Mammary epithelial cell (primary cell): ENCODE measurements at regions of chr12 and their contacts with region 1.

Region 1: DNA sequence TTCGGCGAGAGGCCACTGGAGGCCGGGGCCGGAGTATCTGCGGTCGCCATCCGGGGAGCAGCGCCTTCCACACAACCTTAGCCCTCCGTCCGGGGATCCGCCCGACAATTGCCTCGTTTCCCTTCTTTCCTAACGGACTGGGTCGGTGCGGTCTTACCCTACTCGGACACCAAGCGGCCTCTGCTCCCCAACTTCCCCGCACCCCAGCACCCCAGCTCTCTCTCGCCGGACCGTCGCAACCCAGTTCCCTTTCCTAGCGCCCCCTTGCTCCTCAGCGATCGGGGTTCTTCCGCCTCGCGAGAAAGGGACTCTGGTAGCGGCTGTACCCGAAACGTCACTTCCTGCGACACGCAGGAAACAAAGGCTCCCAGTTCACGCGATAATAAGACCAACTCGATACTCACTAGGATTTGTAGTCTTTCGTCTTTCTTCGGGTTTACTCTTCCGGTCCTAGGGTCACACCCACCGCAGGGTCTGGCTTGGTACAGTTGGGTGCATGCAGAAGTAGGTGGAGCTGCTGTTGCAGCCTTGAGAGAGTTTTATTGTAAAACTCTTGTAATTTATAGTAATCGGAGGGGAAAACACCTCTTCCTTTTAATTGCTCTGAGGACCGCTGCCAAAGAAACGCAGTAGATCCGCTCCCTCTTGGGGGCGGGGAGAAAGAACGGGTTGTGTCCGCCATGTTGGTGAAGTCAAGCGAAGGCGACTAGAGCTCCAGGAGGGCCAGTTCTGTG is at the start of gene ZFC3H1:
- DNase-seq: peak; percentile 99
- H3K4me3 ChIP-seq: peak within 1 kb of the TSS; percentile 78 to 98 (median 92)
- H3K27ac ChIP-seq: peak within 1 kb of the TSS; percentile 96
- H3K4me1 ChIP-seq: peaks cover 13% of the 10 kb centered on the region
- H3K27me3 ChIP-seq: no peaks in the 10 kb centered on the region
- CTCF ChIP-seq: peak in 1 of 2 donors; percentile 45
- total RNA-seq, gene ZFC3H1: 31.2 to 50.2 TPM

Region 2: DNA sequence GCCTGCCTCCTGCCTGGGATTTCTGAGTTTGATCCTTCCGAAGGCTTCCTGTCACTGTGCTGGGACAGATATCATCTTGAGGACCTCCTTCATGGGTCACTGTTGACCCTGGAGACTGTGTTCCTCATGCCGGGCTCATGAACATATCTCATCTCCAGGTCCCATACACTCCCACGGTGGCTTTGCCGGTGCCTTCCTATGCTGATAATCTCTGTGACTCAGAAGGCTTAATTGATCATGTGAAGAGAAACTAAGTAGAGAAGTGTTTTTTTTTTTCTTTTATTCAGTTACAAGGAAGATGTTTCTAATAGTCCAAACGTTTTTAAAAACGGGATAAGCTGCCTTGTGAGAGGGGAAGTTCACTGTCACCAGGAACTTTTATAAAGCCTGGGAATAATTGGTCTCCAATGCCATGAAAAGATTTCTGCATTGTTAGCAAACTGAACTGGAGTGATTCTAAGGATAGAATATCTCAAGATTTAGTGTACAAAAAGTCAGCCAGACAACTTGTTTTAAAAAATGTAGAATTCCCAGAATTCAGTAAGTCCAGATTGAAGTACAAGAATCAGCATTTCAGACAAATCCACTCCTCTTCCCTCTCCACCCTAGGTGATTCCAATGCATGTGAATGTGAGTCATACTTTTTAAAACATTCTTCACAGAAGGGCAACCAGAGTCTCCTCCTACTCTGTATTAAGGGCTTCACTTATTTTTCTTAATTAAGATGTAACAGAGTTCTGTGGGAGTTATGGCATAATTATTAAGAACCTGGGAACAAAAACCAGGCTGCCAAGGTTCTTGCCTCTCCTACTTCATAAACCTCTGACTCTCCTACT is 364.0 kb before region 1 on chr12:
- CTCF ChIA-PET with region 1: no interaction called
- dilution Hi-C with region 1: no loop called
- in situ Hi-C with region 1: no loop called
- intact Hi-C with region 1: no loop called
- DNase-seq: peak; percentile 53
- H3K4me3 ChIP-seq: no peak overlapping the region
- H3K27ac ChIP-seq: no peak overlapping the region
- H3K4me1 ChIP-seq: no peaks in the 10 kb centered on the region
- H3K27me3 ChIP-seq: no peaks in the 10 kb centered on the region
- CTCF ChIP-seq: no peak

Region 3: GRCh38 chr12:71438670-71439361 is 224.9 kb before region 1 on chr12:
- CTCF ChIA-PET with region 1: no interaction called
- dilution Hi-C with region 1: no loop called
- in situ Hi-C with region 1: no loop called
- intact Hi-C with region 1: no loop called
- DNase-seq: no peak
- H3K4me3 ChIP-seq: no peak overlapping the region
- H3K27ac ChIP-seq: no peak overlapping the region
- H3K4me1 ChIP-seq: peaks cover 11% of the 10 kb centered on the region
- H3K27me3 ChIP-seq: peaks cover 42% of the 10 kb centered on the region
- CTCF ChIP-seq: no peak

Region 4: GRCh38 chr12:71503579-71504391 is 159.9 kb before region 1 on chr12:
- CTCF ChIA-PET with region 1: no interaction called
- dilution Hi-C with region 1: no loop called
- in situ Hi-C with region 1: no loop called
- intact Hi-C with region 1: no loop called
- DNase-seq: no peak
- H3K4me3 ChIP-seq: no peak overlapping the region
- H3K27ac ChIP-seq: no peak overlapping the region
- H3K4me1 ChIP-seq: no peaks in the 10 kb centered on the region
- H3K27me3 ChIP-seq: no peaks in the 10 kb centered on the region
- CTCF ChIP-seq: no peak

Region 5: GRCh38 chr12:71685914-71686665 is 22.4 kb after region 1 on chr12 and contains the start of gene TMEM19:
- CTCF ChIA-PET with region 1: interaction called, 6 read pairs
- dilution Hi-C with region 1: no loop called
- in situ Hi-C with region 1: no loop called
- intact Hi-C with region 1: loop called (anchors 1 kb)
- DNase-seq: peak; percentile 91
- H3K4me3 ChIP-seq: peak within 1 kb of the TSS; percentile 86 to 97 (median 89)
- H3K27ac ChIP-seq: peak within 1 kb of the TSS; percentile 81
- H3K4me1 ChIP-seq: peaks cover 11% of the 10 kb centered on the region
- H3K27me3 ChIP-seq: no peaks in the 10 kb centered on the region
- CTCF ChIP-seq: peak in 1 of 2 donors; percentile 65
- total RNA-seq, gene TMEM19: 22.1 to 41.7 TPM

Region 6: DNA sequence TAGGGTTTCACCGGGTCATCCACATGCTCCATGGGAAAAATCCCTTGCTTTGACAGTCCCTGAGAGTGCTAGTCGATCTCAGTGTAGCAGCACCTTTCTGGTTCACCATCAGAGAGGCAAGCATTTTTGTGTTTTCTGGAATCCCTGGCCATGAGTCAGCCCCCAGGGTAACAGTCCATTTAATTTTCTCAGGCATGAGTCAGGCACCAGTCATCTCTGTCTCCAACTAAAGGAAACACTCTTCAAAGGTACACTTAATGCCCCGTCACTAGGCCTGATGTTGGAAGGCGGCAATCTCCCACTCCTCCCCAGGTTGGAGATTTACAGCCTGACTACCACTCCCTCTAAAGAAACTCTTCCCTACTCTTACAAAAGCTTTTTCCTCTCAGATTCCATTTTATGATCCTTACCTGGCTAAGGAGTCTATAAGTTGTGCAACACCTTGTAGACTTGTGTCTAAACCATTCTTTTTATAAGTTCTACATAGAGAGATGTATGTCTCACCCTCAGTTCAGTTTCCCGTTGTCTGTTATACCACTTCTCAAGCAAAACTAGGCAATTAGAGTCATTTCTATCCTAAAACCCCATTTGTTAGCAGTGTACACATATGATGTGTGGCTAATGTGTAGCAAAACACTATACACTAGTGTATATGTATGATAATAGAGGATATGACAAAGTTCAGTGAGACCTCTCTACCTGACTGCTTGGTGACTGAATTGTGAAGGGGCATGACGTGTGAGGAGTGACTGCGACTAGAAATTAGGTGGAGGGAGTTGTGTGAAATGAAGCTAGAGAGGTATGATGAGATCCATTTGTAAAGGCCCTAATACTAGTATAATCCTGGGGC is 46.8 kb after region 1 on chr12:
- CTCF ChIA-PET with region 1: no interaction called
- dilution Hi-C with region 1: loop called (anchors 5 kb)
- in situ Hi-C with region 1: no loop called
- intact Hi-C with region 1: loop called (anchors 2 kb)
- DNase-seq: peak; percentile 97
- H3K4me3 ChIP-seq: no peak overlapping the region
- H3K27ac ChIP-seq: peak overlapping the region; percentile 78
- H3K4me1 ChIP-seq: peaks cover 33% of the 10 kb centered on the region
- H3K27me3 ChIP-seq: no peaks in the 10 kb centered on the region
- CTCF ChIP-seq: no peak

Region 7: GRCh38 chr12:71719615-71720370 is 56.1 kb after region 1 on chr12:
- CTCF ChIA-PET with region 1: interaction called, 37 read pairs
- dilution Hi-C with region 1: loop called (anchors 5 kb)
- in situ Hi-C with region 1: no loop called
- intact Hi-C with region 1: no loop called
- DNase-seq: peak; percentile 95
- H3K4me3 ChIP-seq: peak overlapping the region in 1 of 3 experiments; percentile 16
- H3K27ac ChIP-seq: peak overlapping the region; percentile 22
- H3K4me1 ChIP-seq: peaks cover 16% of the 10 kb centered on the region
- H3K27me3 ChIP-seq: no peaks in the 10 kb centered on the region
- CTCF ChIP-seq: no peak

Region 8: GRCh38 chr12:71746983-71747611 is 83.4 kb after region 1 on chr12:
- CTCF ChIA-PET with region 1: interaction called, 4 read pairs
- dilution Hi-C with region 1: loop called (anchors 5 kb)
- in situ Hi-C with region 1: loop called in 1 of 2 experiments (anchors 5 kb)
- intact Hi-C with region 1: loop called (anchors 1 kb)
- DNase-seq: peak; percentile 50
- H3K4me3 ChIP-seq: no peak overlapping the region
- H3K27ac ChIP-seq: no peak overlapping the region
- H3K4me1 ChIP-seq: no peaks in the 10 kb centered on the region
- H3K27me3 ChIP-seq: no peaks in the 10 kb centered on the region
- CTCF ChIP-seq: peak; percentile 72 to 81

Region 9: GRCh38 chr12:71754461-71755145 is 90.9 kb after region 1 on chr12 and contains the start of gene RAB21:
- CTCF ChIA-PET with region 1: no interaction called
- dilution Hi-C with region 1: loop called (anchors 5 kb)
- in situ Hi-C with region 1: loop called in 1 of 2 experiments (anchors 5 kb)
- intact Hi-C with region 1: loop called (anchors 1 kb)
- DNase-seq: peak; percentile 97
- H3K4me3 ChIP-seq: peak within 1 kb of the TSS; percentile 66 to 86 (median 72)
- H3K27ac ChIP-seq: peak within 1 kb of the TSS; percentile 88
- H3K4me1 ChIP-seq: peaks cover 5% of the 10 kb centered on the region
- H3K27me3 ChIP-seq: no peaks in the 10 kb centered on the region
- CTCF ChIP-seq: peak in 1 of 2 donors; percentile 30
- total RNA-seq, gene RAB21: 13.2 to 76.6 TPM

Region 10: GRCh38 chr12:71840231-71840847 is 176.6 kb after region 1 on chr12:
- CTCF ChIA-PET with region 1: no interaction called
- dilution Hi-C with region 1: no loop called
- in situ Hi-C with region 1: no loop called
- intact Hi-C with region 1: loop called (anchors 10 kb)
- DNase-seq: peak; percentile 86
- H3K4me3 ChIP-seq: peak overlapping the region; percentile 70 to 84 (median 75)
- H3K27ac ChIP-seq: peak overlapping the region; percentile 98
- H3K4me1 ChIP-seq: peaks cover 14% of the 10 kb centered on the region
- H3K27me3 ChIP-seq: no peaks in the 10 kb centered on the region
- CTCF ChIP-seq: no peak